ENCODE measurements at regions of chr3 and their contacts with region 1.

Region 1: GRCh38 chr3:58188173-58188564 is 22.6 kb downstream of the DNASE1L3 start:
- DNase-seq: peak in 1 of 2 experiments; percentile 60
- H3K4me3 ChIP-seq: no peak overlapping the region
- H3K27ac ChIP-seq: no peak overlapping the region
- H3K4me1 ChIP-seq: peaks cover 15% of the 10 kb centered on the region; the same call in 1 of the 2 replicates
- H3K27me3 ChIP-seq: no peaks in the 10 kb centered on the region
- CTCF ChIP-seq: no peak

Region 2: GRCh38 chr3:58299839-58300516 is 111.8 kb after region 1 on chr3:
- CTCF ChIA-PET with region 1: interaction called, 5 read pairs
- POLR2A ChIA-PET with region 1: no interaction called
- intact Hi-C with region 1: loop called (anchors 1 kb)
- DNase-seq: peak in 1 of 2 experiments; percentile 39
- H3K4me3 ChIP-seq: no peak overlapping the region
- H3K27ac ChIP-seq: no peak overlapping the region
- H3K4me1 ChIP-seq: no peaks in the 10 kb centered on the region
- H3K27me3 ChIP-seq: no peaks in the 10 kb centered on the region
- CTCF ChIP-seq: peak; percentile 76

Region 3: DNA sequence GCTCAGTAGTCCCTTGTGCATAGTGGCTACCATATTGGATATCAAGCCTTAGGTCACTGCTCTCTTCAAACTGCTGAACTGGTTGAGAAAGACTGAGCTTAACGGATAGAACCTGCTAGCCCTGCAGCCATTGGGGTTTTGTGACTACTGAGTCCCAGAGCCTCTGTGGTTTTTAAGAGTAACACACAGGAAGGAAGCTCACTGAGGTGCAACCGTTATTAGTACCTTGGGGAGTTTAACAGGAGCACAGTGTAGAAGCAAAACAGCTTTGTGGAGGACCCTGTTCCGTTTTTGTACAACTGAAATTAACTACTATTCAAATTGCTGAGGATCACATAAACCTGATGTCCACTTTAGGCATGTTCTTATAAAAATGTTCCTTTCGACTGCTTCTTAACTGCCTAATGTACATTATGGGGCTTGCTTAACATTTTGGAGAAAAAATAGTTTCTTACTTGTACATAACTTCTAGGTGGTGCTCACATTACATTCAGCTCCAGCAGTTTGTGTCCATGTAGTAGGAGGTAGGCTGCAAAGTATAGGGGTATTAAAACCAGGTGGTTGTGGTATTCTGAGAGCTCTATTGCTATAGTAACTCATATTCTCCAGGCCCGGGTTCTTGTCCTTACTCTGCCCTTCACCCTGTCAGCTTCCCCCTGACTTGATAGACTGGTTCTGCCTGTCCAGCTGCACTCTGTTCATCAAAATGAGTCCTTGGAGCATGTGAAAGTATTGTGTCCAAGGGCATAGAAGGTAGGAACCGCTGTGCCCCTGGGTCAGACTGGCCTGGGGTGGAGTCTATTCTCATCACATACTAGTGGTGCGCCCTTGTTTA is 161.8 kb after region 1 on chr3:
- CTCF ChIA-PET with region 1: interaction called, 10 read pairs
- POLR2A ChIA-PET with region 1: no interaction called
- intact Hi-C with region 1: no loop called
- DNase-seq: peak in 1 of 2 experiments; percentile 15
- H3K4me3 ChIP-seq: no peak overlapping the region
- H3K27ac ChIP-seq: peak overlapping the region; percentile 62
- H3K4me1 ChIP-seq: peaks cover 17% of the 10 kb centered on the region
- H3K27me3 ChIP-seq: no peaks in the 10 kb centered on the region
- CTCF ChIP-seq: no peak

Region 4: GRCh38 chr3:58532794-58533220 is 344.6 kb after region 1 on chr3:
- CTCF ChIA-PET with region 1: no interaction called
- POLR2A ChIA-PET with region 1: no interaction called
- intact Hi-C with region 1: loop called (anchors 1 kb)
- DNase-seq: peak; percentile 52 to 71
- H3K4me3 ChIP-seq: no peak overlapping the region
- H3K27ac ChIP-seq: no peak overlapping the region
- H3K4me1 ChIP-seq: peaks cover 7% of the 10 kb centered on the region; the same call in 1 of the 2 replicates
- H3K27me3 ChIP-seq: no peaks in the 10 kb centered on the region
- CTCF ChIP-seq: peak; percentile 96